ENCODE measurements at regions of chr14 and their contacts with region 1.

Region 1: GRCh38 chr14:93137864-93138263 is 22.1 kb upstream of the ITPK1 start:
- DNase-seq: peak; percentile 63
- H3K4me3 ChIP-seq: no peak overlapping the region
- H3K27ac ChIP-seq: no peak overlapping the region
- H3K4me1 ChIP-seq: peaks cover 24% of the 10 kb centered on the region
- H3K27me3 ChIP-seq: no peaks in the 10 kb centered on the region
- CTCF ChIP-seq: peak; percentile 45

Region 2: GRCh38 chr14:92951912-92952471 is 185.9 kb before region 1 on chr14:
- intact Hi-C with region 1: loop called (anchors 5 kb)
- DNase-seq: peak; percentile 82
- H3K4me3 ChIP-seq: no peak overlapping the region
- H3K27ac ChIP-seq: peak overlapping the region; percentile 87
- H3K4me1 ChIP-seq: peaks cover 75% of the 10 kb centered on the region
- H3K27me3 ChIP-seq: no peaks in the 10 kb centered on the region
- CTCF ChIP-seq: peak; percentile 97

Region 3: GRCh38 chr14:93007225-93007997 is 130.5 kb before region 1 on chr14:
- intact Hi-C with region 1: no loop called
- DNase-seq: no peak
- H3K4me3 ChIP-seq: no peak overlapping the region
- H3K27ac ChIP-seq: peak overlapping the region; percentile 87
- H3K4me1 ChIP-seq: peaks cover 98% of the 10 kb centered on the region
- H3K27me3 ChIP-seq: no peaks in the 10 kb centered on the region
- CTCF ChIP-seq: no peak